ENCODE measurements at regions of chr17 and their contacts with region 1.

Region 1: DNA sequence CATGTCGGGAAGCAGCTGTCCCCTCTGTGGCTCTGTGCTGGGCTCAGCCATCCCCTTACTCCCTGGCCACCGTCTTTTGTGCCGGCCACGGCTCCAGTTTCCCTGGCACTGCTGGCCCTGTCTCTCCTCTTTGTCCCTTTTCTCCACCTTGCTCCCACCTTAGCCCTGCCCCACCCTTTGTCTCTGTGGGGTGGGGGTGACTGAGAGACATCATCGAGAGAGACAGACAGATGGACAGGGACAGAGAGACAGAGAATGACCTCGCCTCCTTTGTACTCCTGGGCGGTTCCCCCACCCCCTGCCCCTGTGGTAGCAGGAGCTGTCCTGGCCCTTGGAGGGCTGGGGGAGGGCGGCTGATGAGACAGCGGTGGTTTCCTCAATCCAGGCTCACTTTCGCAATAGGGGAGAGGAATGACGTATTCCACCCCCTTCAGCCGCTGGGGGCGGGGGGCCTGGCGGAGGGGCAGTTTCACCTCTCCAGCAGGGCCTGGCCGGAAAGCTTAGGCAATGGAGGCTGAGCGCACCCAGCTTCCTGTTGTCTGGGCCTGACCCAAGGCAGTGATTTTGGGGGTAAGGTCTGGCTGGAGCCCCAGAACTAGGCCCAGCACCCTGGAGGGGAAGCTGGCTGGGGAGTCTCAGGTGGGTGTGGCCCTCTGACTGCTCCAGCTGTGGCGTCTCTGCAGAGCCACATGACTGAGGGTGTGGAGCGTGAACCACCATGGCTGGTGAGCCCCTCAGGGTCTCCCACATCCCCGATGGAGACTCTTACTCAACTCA is 7.3 kb downstream of the FMNL1 start:
- DNase-seq: peak; percentile 96
- ATAC-seq: peak; percentile 41
- H3K4me3 Mint-ChIP-seq: peak overlapping the region; percentile 99
- H3K27ac Mint-ChIP-seq: peak overlapping the region; percentile 99
- H3K4me1 Mint-ChIP-seq: peaks cover 70% of the 10 kb centered on the region
- H3K27me3 Mint-ChIP-seq: no peaks in the 10 kb centered on the region
- CTCF ChIP-seq: no peak

Region 2: DNA sequence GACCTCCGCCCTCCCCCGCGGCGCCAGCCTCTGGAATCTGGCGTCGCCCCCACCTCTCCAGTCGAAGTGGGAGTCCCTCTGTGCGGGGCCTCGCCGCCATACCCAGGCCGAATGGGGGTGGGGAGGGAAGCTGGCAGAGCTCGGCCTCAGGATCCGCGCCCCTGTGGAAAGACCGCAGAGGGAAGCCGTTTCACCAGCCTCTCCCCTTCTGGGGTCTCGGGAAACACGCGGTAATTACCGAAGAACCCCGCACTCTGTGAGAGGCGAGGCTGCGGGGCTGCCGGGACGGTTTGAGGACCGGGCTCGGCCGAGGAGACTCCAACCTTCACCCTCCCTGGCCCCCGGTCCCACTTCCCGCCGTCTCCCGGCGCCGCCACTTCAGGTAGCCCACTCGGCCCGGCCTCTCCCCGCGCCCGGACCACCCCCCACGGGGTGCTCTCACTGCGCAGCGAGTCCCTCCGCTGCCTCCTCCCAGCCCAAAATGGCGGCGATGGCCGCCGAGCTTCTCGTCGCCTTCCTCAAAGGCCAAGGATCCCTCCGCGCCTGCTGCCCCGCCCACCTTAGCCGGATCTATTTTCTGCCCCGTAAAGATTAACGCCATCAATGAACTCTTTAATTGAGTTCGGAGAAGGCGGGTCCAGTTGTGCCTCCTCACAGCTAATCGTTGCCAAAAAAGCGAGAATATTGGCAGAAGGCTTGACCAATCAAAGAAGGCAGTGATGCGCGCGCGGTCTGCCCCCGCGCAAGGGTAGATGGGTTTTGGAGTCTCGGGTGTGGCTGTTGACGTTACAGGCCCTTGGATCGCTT is 67.7 kb before region 1 on chr17:
- CTCF ChIA-PET with region 1: interaction called, 3 read pairs
- POLR2A ChIA-PET with region 1: interaction called, 10 read pairs
- intact Hi-C with region 1: no loop called
- DNase-seq: peak; percentile 99
- ATAC-seq: peak; percentile 97
- H3K4me3 Mint-ChIP-seq: peak overlapping the region; percentile 95
- H3K27ac Mint-ChIP-seq: peak overlapping the region; percentile 99
- H3K4me1 Mint-ChIP-seq: peaks cover 39% of the 10 kb centered on the region
- H3K27me3 Mint-ChIP-seq: no peaks in the 10 kb centered on the region
- CTCF ChIP-seq: no peak

Region 3: GRCh38 chr17:45247429-45248131 is 18.6 kb after region 1 on chr17:
- CTCF ChIA-PET with region 1: interaction called, 20 read pairs
- POLR2A ChIA-PET with region 1: interaction called, 399 read pairs
- intact Hi-C with region 1: no loop called
- DNase-seq: peak; percentile 100
- ATAC-seq: peak; percentile 91
- H3K4me3 Mint-ChIP-seq: peak overlapping the region; percentile 88
- H3K27ac Mint-ChIP-seq: peak overlapping the region; percentile 91
- H3K4me1 Mint-ChIP-seq: peaks cover 61% of the 10 kb centered on the region
- H3K27me3 Mint-ChIP-seq: no peaks in the 10 kb centered on the region
- CTCF ChIP-seq: no peak

Region 4: DNA sequence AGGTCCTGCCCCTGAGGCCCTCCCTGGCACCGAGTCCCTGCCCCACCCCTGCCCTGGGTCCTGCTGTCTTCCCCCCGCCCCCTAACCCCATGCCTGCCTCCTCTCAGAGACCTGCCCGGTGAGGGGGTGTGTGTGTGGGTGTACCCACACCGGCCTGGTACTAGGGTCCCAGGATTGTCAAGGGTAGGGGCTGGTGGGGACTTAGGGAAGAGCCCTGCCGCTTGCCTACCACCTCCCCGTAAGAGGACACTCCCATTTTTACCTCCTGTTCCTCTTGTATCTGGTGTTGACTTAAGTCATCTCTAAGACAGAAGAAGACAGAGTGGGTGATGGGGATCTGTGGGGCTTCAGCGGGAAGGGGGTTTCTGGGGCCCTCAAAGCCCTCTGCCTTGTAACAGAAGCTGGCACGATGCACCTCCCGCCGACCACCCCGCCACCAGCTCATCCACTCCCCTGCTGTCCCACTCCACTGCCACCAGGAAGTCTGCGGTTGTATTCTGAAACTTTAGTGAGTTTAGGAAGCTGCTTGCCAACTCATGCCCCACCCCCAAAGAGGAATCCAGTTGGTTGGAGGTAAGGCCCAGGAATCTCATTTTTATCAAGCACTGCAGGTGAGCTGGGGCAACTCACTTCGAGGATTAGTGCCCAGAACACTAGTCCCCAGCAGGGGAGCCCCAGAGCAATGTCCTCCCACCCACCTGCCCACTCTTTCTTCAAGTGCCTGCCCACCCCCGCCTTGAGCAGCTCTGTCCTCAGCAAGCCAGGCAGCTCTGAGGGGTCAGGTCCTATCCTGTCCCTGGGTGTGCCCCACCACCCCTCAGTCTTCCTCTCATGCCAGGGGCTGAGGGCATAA is 27.4 kb after region 1 on chr17:
- CTCF ChIA-PET with region 1: interaction called, 7 read pairs
- POLR2A ChIA-PET with region 1: interaction called, 10 read pairs
- intact Hi-C with region 1: loop called (anchors 5 kb)
- DNase-seq: peak; percentile 49
- ATAC-seq: peak; percentile 35
- H3K4me3 Mint-ChIP-seq: no peak overlapping the region
- H3K27ac Mint-ChIP-seq: peak overlapping the region; percentile 73
- H3K4me1 Mint-ChIP-seq: peaks cover 58% of the 10 kb centered on the region
- H3K27me3 Mint-ChIP-seq: no peaks in the 10 kb centered on the region
- CTCF ChIP-seq: peak; percentile 37

Region 5: GRCh38 chr17:45317112-45317928 is 88.4 kb after region 1 on chr17:
- CTCF ChIA-PET with region 1: interaction called, 13 read pairs
- POLR2A ChIA-PET with region 1: interaction called, 211 read pairs
- intact Hi-C with region 1: loop called (anchors 5 kb)
- DNase-seq: peak; percentile 100
- ATAC-seq: peak; percentile 81
- H3K4me3 Mint-ChIP-seq: peak overlapping the region; percentile 81
- H3K27ac Mint-ChIP-seq: peak overlapping the region; percentile 88
- H3K4me1 Mint-ChIP-seq: peaks cover 60% of the 10 kb centered on the region
- H3K27me3 Mint-ChIP-seq: no peaks in the 10 kb centered on the region
- CTCF ChIP-seq: no peak